ENCODE measurements at regions of chr13 and their contacts with region 1.

Region 1: DNA sequence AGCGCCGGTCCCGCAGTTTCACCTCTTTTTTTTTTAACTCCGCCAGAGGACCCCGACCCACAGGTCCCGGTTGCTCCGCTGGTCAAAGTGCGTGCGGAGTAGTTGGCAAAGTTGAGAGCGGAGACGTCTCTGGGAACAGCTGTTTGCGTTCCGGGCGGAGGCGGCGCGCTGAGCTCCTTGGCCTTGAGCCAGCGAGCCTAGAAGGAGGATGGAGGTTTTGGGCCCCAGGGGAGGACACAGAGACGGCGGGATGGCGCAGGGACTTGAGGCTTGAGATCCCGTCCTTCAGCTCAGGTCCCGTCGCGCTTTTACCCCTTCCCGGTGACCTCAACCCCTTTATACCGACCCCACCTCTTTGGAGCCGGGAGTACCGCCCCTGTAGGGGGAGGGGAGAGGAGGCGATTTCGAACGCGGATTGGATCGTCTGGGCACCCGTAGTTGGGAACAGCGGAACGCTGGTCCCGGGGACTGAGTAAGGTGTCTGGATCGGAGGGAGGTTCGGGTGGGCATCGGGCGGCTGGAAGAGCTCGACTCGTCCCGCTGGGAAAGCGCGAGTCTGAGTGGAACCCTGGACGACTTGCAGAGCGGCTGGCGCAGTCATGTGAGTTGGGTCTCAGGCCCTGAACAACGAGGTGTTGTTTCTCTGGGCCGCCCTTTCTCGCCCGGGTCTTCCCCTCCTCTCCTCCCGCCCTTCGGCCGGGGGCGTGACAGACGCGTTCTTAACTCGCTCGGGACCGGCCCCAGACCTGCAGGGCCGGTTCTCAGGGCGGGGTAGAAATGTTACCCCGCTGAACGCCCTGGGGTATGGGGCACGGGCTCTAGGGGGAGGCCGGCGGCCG is at the start of gene WBP4:
- DNase-seq: peak in 1 of 2 donors; percentile 98
- H3K4me3 ChIP-seq: peak within 1 kb of the TSS; percentile 72 to 75
- H3K27ac ChIP-seq: peak within 1 kb of the TSS; percentile 95
- H3K4me1 ChIP-seq: peaks cover 70% of the 10 kb centered on the region
- H3K27me3 ChIP-seq: no peaks in the 10 kb centered on the region
- CTCF ChIP-seq: no peak
- POLR2A ChIP-seq: peak in 1 of 2 donors; percentile 35
- total RNA-seq, gene WBP4: 13.5 TPM

Region 2: DNA sequence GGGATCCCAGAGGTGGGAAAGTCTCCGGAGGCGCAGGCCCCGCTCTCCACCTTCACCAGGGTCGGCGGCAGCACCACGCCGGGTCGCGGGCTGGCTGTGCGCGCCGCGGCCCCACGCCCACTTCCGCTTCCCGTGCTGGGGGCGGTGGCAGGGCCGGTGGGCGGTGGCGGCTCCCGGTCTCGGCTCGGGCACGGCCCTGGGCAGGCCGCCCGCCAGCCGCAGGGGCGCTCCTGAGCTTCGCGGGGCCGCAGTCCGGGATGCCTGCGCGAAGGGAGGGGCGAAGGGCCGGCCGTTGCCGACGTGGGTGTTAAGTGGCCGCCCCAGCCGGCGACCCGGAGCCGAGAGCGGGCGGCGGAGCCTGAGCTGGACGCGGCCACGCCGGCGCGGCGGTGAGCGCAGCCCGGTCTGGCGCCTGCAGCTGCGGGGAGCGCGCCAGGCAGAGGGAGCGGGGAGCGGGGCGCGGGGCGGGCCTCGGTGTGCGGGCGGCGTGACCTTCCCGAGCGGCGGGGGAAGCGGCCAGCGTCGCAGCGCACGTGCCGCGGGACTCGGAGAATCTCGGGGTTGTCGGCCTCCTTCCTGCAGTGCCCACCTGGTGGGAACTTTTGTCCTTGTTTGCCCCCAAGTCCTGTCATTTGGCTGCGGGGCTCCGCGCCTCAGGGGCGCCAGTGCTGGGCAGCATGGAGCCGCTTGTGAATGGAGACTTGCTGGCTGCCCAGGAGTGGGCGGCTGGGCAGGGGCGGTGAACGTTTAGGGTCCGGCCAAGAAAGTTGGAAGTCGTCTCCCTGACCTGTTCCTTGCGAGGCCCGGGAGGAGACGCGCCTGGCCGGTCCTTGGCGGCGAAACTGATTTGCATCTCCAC is 271.8 kb before region 1 on chr13 and contains the start of gene SLC25A15:
- intact Hi-C with region 1: loop called (anchors 2 kb)
- DNase-seq: no peak
- H3K4me3 ChIP-seq: peak within 1 kb of the TSS; percentile 58 to 89
- H3K27ac ChIP-seq: peak within 1 kb of the TSS; percentile 84
- H3K4me1 ChIP-seq: peaks cover 13% of the 10 kb centered on the region
- H3K27me3 ChIP-seq: no peaks in the 10 kb centered on the region
- CTCF ChIP-seq: no peak
- POLR2A ChIP-seq: no peak
- total RNA-seq, gene SLC25A15: 7.1 TPM